MCF 10A (cell line): ENCODE measurements at regions of chr5 and their contacts with region 1.

Region 1: DNA sequence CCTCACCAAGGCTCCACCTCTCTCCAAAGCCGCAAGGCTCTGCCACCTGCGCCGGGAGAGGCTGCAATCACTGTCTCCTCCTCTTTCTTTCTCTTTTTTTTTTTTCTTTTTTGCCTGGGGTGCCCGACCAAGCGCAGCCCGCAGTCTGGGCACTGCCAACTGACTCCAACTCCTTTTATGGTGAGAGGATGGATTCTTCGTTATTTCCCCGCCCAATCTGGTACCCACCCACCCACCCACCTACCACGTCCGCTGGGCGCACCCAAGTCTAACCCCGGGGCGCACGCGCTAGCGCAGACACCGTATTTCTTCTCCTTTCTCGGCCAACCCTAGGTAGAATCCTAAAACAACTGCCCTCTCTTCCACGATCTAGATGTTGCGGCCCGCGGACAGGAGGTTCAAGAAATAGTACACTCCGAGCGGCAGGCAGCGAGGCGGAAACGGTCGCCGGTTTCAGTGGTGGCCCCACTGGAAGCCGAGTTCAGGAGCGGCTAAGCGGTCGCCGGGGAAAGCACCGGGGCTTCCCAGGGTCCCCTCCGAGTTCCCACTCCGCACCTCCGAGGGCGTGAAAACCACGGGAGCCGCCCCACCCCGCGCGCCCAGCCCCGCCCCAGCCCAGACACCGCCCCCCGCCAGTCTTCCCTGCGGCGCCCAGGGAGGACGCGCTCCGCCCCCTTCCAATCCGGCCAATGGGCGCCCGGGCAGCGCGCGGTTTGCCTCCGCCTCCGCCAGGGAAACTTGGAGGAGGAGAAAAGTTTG is 381 bp upstream of the PTGER4 start:
- DNase-seq: peak; percentile 96
- H3K4me3 Mint-ChIP-seq: peak overlapping the region; percentile 91
- H3K27ac Mint-ChIP-seq: peak overlapping the region; percentile 97
- H3K4me1 Mint-ChIP-seq: peaks cover 60% of the 10 kb centered on the region
- H3K27me3 Mint-ChIP-seq: no peaks in the 10 kb centered on the region
- CTCF ChIP-seq: no peak

Region 2: DNA sequence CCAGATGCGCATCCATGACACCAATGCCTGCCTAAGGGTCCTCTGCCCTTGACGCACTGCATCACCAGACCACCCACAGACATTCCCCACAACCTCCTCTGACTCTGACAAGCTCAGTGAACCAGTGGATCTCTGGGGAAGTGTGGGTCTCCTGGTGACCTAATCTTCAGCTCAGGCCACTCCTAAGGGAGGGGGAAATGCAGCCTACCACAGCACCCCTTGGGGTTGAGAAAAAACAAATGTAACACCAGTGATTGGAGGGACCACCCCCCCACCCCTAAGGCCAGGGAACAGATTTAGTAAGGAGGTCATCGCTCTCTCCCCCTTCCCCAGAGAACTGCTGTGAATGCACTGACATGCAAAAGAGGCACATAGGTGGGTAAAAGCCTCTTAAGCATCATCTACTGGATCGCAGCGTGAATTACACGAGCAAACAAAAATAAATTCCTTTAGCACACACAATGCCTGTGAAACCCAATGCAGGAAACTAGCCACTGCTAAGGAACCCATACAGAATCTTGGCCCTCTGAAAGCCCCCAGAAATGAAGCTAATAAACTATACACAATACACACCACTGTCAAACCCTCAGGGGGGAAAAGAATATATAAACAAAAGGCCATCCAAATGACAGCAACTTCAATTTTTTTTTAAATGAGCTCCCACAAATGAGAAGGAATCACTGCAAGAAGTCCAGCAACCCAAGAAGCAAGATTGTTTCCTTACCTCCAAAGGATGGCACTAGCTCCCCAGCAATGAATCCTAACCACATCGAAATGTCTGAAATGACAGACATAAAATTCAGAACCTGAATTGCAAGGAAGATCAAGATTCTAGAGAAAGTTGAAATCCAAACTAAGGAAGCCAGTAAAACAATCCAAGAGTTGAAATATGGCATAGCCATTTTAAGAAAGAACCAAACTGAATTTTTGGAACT is 513.3 kb before region 1 on chr5:
- CTCF ChIA-PET with region 1: no interaction called
- POLR2A ChIA-PET with region 1: interaction called, 4 read pairs
- intact Hi-C with region 1: loop called (anchors 2 kb)
- DNase-seq: peak; percentile 14
- H3K4me3 Mint-ChIP-seq: no peak overlapping the region
- H3K27ac Mint-ChIP-seq: no peak overlapping the region
- H3K4me1 Mint-ChIP-seq: peaks cover 10% of the 10 kb centered on the region
- H3K27me3 Mint-ChIP-seq: no peaks in the 10 kb centered on the region
- CTCF ChIP-seq: peak; percentile 16

Region 3: DNA sequence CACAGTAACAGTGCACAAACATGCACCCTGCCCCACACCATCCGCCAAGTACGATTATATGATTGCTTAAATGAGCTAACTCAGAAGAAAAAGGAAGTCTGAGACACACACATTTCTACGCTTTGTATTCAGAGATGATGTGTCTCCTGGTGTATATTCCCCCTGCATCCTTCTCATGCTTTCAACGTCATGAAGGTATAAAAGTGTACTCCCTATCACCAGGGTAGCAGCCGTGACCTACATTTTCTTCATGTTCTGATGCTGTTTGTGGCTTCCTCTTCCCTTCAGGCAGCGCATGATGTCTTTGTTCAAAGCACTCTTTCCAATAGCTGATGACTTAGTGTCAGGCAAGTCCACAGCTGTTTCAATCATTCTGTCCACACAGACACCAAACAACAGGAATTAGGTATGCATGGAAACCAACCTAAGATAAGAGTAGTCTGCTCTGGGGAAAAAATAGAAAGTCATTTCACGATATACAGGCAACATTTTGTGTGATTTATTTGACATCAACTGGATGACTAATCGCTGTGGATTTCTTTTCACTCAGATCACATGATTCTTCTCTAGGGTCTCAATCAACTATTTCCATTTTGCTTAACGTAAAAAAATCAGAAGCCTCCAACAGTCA is 269.0 kb before region 1 on chr5:
- CTCF ChIA-PET with region 1: interaction called, 3 read pairs
- POLR2A ChIA-PET with region 1: interaction called, 6 read pairs
- intact Hi-C with region 1: loop called (anchors 5 kb)
- DNase-seq: peak; percentile 53
- H3K4me3 Mint-ChIP-seq: peak overlapping the region; percentile 41
- H3K27ac Mint-ChIP-seq: peak overlapping the region; percentile 59
- H3K4me1 Mint-ChIP-seq: peaks cover 27% of the 10 kb centered on the region
- H3K27me3 Mint-ChIP-seq: no peaks in the 10 kb centered on the region
- CTCF ChIP-seq: no peak

Region 4: DNA sequence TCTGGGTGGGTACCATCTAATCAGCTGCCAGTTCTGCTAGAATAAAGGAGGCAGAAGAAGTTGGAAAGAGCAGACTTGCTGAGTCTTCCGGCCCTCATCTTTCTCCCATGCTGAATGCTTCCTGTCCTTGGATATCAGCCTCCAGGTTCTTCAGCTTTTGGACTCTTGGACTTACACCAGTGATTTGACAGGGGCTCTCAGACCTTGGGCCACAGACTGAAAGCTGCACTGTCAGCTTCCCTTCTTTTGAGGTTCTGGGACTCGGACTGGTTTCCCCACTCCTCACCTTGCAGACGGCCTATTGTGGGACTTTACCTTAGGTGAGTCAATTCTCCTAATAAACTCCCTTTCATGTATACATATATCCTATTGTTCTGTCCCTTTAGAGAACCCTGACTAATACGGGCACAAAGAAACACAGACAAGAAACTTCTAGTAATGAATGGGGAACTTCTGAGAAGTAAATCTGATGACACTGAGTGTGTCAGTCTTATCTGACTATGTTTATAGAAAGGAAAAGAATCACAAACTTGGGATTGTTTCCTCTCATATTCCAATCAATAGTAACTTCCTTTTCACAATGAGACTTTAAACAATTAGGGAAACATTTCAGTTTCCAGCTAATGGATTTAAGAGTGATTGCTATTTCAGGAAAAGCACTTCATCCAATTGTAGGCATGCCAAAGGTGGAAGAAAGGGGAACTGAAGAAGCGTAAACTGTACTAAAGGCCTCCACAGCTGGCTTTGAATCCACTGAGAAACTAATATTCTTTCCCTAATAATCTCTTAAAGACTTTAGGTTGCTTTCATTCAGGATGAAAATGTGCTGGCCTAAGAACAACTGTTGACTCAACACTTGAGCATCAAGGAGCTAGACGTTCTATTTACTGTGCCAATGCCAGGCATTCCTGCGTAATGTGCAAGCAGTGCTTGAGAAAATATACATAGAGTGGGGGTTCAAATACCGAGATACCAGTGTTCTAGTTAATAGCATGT is 127.5 kb before region 1 on chr5:
- CTCF ChIA-PET with region 1: interaction called, 4 read pairs
- POLR2A ChIA-PET with region 1: interaction called, 6 read pairs
- intact Hi-C with region 1: loop called (anchors 5 kb)
- DNase-seq: peak; percentile 86
- H3K4me3 Mint-ChIP-seq: peak overlapping the region; percentile 41
- H3K27ac Mint-ChIP-seq: peak overlapping the region; percentile 87
- H3K4me1 Mint-ChIP-seq: peaks cover 27% of the 10 kb centered on the region
- H3K27me3 Mint-ChIP-seq: no peaks in the 10 kb centered on the region
- CTCF ChIP-seq: no peak